Psoas muscle (tissue), 8 donors: ENCODE measurements at regions of chr4 and their contacts with region 1.

Region 1: DNA sequence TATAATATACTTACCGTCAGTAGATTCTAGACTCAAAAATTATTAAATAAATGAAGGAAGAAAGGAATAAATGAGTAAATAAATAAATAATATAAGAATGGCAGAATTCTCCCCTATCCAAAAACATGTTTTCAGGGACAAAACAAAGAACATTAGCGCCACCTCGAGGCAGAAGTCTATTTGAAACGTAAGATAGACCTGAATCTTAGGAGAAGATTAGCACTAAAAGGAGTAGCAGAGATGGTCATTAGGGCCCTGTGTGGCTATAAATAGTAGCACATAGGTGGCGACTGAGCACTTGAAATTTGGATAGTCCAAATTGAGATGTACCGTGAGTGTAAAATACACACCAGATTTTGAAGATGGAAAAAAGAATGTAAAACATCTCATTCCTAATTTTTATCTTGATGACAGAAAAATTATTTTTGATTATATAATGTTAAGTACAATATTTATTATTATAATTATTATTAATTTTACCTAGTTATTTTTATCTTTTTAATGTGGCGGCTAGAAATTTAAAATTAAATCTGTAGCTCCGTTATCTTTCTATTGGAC is 24.3 kb upstream of the SRD5A3 start:
- DNase-seq: peak in 1 of 2 donors; percentile 29
- ATAC-seq: no peak
- H3K4me3 ChIP-seq: no peak overlapping the region
- H3K27ac ChIP-seq: no peak overlapping the region
- H3K4me1 ChIP-seq: no peaks in the 10 kb centered on the region
- H3K27me3 ChIP-seq: no peaks in the 10 kb centered on the region
- CTCF ChIP-seq: peak; percentile 52

Region 2: GRCh38 chr4:54999003-54999402 is 322.8 kb before region 1 on chr4:
- intact Hi-C with region 1: loop called (anchors 5 to 10 kb)
- DNase-seq: no peak
- ATAC-seq: peak in 1 of 4 donors; percentile 35
- H3K4me3 ChIP-seq: no peak overlapping the region
- H3K27ac ChIP-seq: no peak overlapping the region
- H3K4me1 ChIP-seq: no peaks in the 10 kb centered on the region
- H3K27me3 ChIP-seq: no peaks in the 10 kb centered on the region
- CTCF ChIP-seq: peak; percentile 38

Region 3: DNA sequence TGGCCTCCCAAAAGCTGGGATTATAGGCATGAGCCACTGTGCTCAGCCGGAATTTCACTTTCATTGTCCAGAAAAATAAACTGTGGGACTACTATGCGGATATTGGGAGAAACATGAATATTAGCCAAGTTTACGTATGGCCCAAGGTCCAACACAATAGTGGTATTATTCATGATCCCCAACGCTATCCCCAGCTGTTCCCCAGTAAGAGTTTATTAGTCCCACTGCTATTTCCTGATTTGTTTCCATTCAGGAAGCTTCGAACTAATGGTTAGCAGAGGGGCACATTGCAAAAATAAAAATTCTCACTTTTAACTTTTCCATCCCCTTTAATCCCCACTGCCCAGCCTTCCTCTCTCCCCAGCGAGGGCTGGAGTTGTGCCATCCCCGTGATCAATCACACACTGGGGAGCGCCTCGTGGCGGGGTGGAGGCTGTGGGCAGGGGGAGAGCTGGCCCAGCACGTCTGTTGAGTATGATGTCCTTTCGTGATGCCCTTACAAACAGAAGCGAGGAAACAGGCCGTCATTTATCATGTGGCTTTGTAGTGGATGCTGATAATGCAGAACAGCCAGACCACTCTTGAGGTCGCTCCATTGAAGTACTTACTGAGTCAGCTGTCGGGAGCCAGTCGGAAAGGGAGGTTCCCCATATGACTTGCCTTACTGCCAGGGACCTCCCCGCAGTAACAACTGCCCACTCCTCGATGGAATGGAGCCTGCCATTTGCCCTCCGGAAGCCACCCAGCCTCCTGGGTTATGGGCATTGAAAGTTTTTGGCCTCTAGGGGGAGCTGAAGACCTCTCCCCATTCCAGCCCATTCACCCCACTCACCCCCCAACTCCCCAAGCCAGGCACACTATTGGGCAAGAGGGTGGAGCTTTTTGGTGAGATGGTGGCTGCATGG is 313.4 kb before region 1 on chr4:
- intact Hi-C with region 1: loop called in 1 of 2 experiments (anchors 10 kb)
- DNase-seq: no peak
- ATAC-seq: no peak
- H3K4me3 ChIP-seq: no peak overlapping the region
- H3K27ac ChIP-seq: no peak overlapping the region
- H3K4me1 ChIP-seq: no peaks in the 10 kb centered on the region
- H3K27me3 ChIP-seq: no peaks in the 10 kb centered on the region
- CTCF ChIP-seq: no peak